Prostate gland (tissue), 2 donors: ENCODE measurements at regions of chr12 and their contacts with region 1.

Region 1: GRCh38 chr12:38316391-38317129 is at the start of gene ALG10B:
- DNase-seq: peak; percentile 94
- H3K4me3 ChIP-seq: peak within 1 kb of the TSS; percentile 55 to 70
- H3K27ac ChIP-seq: peak within 1 kb of the TSS; percentile 70 to 88
- H3K4me1 ChIP-seq: no peaks in the 10 kb centered on the region
- H3K27me3 ChIP-seq: no peaks in the 10 kb centered on the region
- CTCF ChIP-seq: peak; percentile 51 to 79 (median 74)
- POLR2A ChIP-seq: no peak
- total RNA-seq, gene ALG10B: 4.2 to 6.8 TPM

Region 2: DNA sequence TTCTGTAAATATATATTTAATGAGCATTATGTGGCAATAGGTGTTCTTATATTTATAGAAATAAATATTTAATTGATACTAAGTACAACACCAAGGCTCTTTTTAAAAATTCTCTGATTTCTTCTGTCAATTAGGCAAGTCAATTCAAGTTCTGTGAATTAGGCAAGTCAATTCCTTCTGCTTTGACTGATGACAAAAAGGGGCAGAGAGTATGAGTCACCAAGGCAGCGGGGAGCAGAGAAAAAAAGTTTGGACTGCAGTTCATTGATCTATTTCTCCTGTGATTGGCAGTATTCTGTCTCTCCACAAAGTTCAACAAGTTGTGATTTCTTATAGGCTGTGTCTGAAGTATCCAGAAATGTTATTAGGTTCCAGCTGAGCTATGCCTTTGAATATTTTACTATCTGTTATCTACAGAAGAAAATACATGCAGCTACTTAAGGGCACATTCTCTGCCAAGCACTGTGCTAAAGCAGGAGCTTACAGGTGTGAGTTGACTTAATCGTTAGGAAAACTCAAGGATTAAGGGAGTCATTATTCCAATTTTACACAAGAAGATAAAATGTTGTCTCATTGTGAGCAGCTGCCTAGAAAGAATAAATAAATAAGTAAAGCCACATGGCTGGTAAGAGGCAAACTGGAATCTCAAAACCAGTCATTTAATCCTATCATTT is 206.4 kb before region 1 on chr12:
- intact Hi-C with region 1: no loop called
- DNase-seq: no peak
- H3K4me3 ChIP-seq: no peak overlapping the region
- H3K27ac ChIP-seq: no peak overlapping the region
- H3K4me1 ChIP-seq: no peaks in the 10 kb centered on the region
- H3K27me3 ChIP-seq: no peaks in the 10 kb centered on the region
- CTCF ChIP-seq: no peak
- POLR2A ChIP-seq: no peak

Region 3: GRCh38 chr12:38138225-38139221 is 178.0 kb before region 1 on chr12:
- intact Hi-C with region 1: loop called (anchors 2 kb)
- DNase-seq: peak; percentile 61
- H3K4me3 ChIP-seq: peak overlapping the region; percentile 21 to 23
- H3K27ac ChIP-seq: no peak overlapping the region
- H3K4me1 ChIP-seq: peaks cover 4% of the 10 kb centered on the region
- H3K27me3 ChIP-seq: no peaks in the 10 kb centered on the region
- CTCF ChIP-seq: peak; percentile 85 to 96 (median 92)
- POLR2A ChIP-seq: no peak

Region 4: GRCh38 chr12:38269897-38270296 is 46.7 kb before region 1 on chr12:
- intact Hi-C with region 1: no loop called
- DNase-seq: no peak
- H3K4me3 ChIP-seq: no peak overlapping the region
- H3K27ac ChIP-seq: no peak overlapping the region
- H3K4me1 ChIP-seq: no peaks in the 10 kb centered on the region
- H3K27me3 ChIP-seq: no peaks in the 10 kb centered on the region
- CTCF ChIP-seq: no peak
- POLR2A ChIP-seq: no peak